Ascending aorta (tissue), 2 donors: ENCODE measurements at regions of chr10 and their contacts with region 1.

Region 1: DNA sequence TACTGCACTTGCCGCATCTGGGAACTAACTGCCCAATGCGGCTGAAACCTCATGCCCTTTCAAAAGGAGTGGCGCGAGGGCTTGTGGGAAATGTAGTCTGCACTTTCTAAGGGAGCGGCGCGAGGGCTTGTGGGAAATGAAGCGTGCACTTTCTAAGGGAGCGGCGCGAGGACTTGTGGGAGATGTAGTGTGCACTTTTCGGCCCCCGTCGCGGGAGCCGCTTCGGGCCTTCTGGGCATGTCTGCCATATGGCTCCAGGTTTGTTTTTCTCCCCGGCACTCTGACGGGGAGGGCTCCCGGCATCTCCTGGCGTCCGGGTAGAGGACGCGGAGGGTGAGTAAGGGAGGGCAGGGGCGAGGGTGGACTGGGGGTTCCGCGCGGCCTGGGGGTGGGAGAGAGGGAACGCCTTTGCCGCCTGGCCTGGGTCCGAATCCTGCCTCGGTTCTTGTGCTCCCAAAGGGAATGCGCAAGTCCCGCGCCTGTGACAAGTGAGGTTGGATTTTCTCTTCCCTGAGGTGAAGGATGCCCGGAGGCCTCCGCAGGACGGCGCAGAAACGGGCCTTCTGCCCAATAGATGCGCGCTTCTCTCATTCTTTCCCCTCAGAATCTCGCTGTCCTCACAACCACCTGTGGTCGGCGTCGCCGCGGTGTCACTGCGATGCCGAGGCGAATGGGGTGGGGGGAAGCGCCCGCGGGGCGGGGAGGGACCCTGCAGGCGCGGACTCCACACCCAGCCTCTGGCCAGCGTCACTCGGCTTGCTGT is at the start of gene ZNF37A:
- DNase-seq: peak; percentile 83 to 97
- H3K4me3 ChIP-seq: peak within 1 kb of the TSS; percentile 89 to 90
- H3K27ac ChIP-seq: peak within 1 kb of the TSS; percentile 83 to 89
- H3K4me1 ChIP-seq: peaks cover 6% of the 10 kb centered on the region in 2 donors
- H3K27me3 ChIP-seq: no peaks in the 10 kb centered on the region
- CTCF ChIP-seq: no peak
- total RNA-seq, gene ZNF37A: 2.8 TPM

Region 2: GRCh38 chr10:37857287-37858211 is 236.8 kb before region 1 on chr10 and contains the start of gene ZNF248:
- intact Hi-C with region 1: loop called (anchors 5 kb)
- DNase-seq: peak; percentile 88 to 97
- H3K4me3 ChIP-seq: peak within 1 kb of the TSS; percentile 81
- H3K27ac ChIP-seq: peak within 1 kb of the TSS; percentile 99 to 100
- H3K4me1 ChIP-seq: peaks cover 0 to 26% of the 10 kb centered on the region in 2 donors
- H3K27me3 ChIP-seq: no peaks in the 10 kb centered on the region
- CTCF ChIP-seq: peak in 1 of 3 experiments; percentile 9
- total RNA-seq, gene ZNF248: 13.9 TPM

Region 3: DNA sequence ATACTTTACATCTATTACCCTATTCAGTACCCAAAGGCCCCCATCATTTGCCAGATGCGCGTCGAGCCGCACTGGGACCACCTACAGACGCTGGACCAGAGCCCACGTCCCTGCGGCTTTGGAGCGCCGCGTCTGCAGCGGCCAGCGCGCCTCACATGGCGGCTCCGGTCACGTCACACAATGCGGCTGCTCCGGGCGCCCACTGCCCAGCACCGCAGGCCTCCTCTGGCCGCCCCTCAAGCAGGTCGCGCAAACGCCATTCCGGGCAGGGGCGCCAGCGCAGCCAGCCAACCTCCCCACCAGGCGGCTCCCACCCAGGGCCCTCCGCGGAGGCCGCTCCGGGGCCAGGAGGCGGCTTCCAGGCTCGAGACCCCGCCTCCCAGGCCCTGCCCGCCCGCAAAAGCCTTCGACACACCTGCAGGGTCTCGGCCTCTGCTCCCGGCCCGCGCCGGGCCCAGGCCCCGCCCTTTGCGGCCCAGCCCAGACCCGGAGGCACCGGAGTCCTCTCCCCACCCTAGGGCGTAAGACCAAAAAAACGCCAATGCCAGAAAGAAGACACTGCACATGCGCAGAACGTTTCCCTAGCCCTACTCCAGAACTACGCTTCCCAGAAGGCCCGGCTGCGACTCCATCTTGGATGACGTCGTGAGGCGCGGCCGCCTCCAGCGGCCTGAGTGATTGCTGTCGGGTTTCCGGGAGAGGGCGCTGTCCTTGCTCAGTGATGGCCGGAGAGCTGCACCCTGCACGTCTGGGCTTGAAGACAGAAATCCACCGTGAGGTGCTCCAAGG is 118.1 kb before region 1 on chr10 and contains the start of gene ZNF25:
- intact Hi-C with region 1: loop called (anchors 1 kb)
- DNase-seq: peak; percentile 96 to 100
- H3K4me3 ChIP-seq: peak within 1 kb of the TSS; percentile 75 to 92
- H3K27ac ChIP-seq: peak within 1 kb of the TSS; percentile 97 to 98
- H3K4me1 ChIP-seq: no peaks in the 10 kb centered on the region
- H3K27me3 ChIP-seq: no peaks in the 10 kb centered on the region
- CTCF ChIP-seq: peak; percentile 84 to 92 (median 89)
- total RNA-seq, gene ZNF25: 8.9 TPM

Region 4: GRCh38 chr10:38010119-38010903 is 84.0 kb before region 1 on chr10 and contains the start of gene ZNF33A:
- intact Hi-C with region 1: loop called (anchors 1 kb)
- DNase-seq: peak; percentile 83 to 96
- H3K4me3 ChIP-seq: peak within 1 kb of the TSS; percentile 61 to 89
- H3K27ac ChIP-seq: peak within 1 kb of the TSS; percentile 97 to 98
- H3K4me1 ChIP-seq: peaks cover 0 to 9% of the 10 kb centered on the region in 2 donors
- H3K27me3 ChIP-seq: no peaks in the 10 kb centered on the region
- CTCF ChIP-seq: peak in 1 of 3 experiments; percentile 8
- total RNA-seq, gene ZNF33A: 8.0 TPM